ENCODE measurements at regions of chr7 and their contacts with region 1.

Region 1: DNA sequence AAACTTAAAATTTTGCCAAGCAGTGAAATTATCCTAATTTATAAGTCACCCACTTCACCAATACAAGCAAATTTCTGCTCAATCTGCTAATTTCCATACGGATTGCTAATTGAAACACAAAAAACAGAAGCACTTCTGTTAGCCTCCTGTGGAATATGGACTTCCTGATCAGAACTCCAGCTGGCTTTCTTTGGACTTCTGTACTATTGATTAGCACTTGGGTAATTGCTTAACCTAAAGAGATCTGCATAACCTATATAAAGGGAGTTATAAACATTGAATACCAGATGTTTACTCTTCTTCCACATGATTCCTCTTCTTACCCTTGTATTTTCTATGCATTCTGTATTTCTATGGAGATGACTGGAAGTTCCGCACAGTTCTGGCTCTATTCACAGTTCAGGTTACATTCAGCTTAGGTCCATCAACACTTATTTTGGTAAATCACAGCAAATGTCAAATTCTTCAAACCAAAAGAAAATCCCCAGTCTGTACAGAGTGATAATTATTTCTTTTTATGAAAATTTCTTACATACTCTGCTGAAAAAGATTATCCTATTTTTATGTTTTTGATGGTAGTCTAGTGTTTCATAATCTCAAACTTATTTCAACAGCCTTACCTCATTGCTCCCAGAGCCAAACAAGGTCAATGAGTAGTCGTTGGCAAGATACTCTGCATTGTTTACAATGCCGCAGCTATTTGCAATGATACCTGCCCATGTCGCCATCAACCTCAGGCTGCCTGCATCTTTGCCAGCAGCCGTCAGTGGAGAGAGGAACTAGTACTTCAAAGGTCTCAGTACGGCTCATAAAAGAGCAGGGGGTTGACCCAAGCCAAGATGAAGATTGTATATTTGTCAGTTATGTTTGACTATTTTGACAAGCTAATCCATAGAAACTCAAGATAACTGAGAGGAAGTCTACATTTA is 225.6 kb downstream of the AHR start:
- DNase-seq: no peak
- ATAC-seq: no peak
- H3K4me3 ChIP-seq: no peak overlapping the region
- H3K4me3 Mint-ChIP-seq: no peak overlapping the region
- H3K27ac ChIP-seq: no peak overlapping the region
- H3K27ac Mint-ChIP-seq: no peak overlapping the region
- H3K4me1 ChIP-seq: peaks cover 0 to 5% of the 10 kb centered on the region in 2 experiments
- H3K4me1 Mint-ChIP-seq: peaks cover 3 to 9% (median 5%) of the 10 kb centered on the region in 3 donors
- H3K27me3 ChIP-seq: no peaks in the 10 kb centered on the region
- H3K27me3 Mint-ChIP-seq: no peaks in the 10 kb centered on the region

Region 2: GRCh38 chr7:17709127-17709526 is 185.1 kb after region 1 on chr7:
- CTCF ChIA-PET with region 1: no interaction called
- POLR2A ChIA-PET with region 1: interaction called in 1 of 2 experiments, 11 read pairs
- DNase-seq: no peak
- ATAC-seq: no peak
- H3K4me3 ChIP-seq: no peak overlapping the region
- H3K4me3 Mint-ChIP-seq: no peak overlapping the region
- H3K27ac ChIP-seq: no peak overlapping the region
- H3K27ac Mint-ChIP-seq: no peak overlapping the region
- H3K4me1 ChIP-seq: no peaks in the 10 kb centered on the region
- H3K4me1 Mint-ChIP-seq: no peaks in the 10 kb centered on the region
- H3K27me3 ChIP-seq: no peaks in the 10 kb centered on the region
- H3K27me3 Mint-ChIP-seq: no peaks in the 10 kb centered on the region

Measured in T-cell (primary cell).